ENCODE measurements at regions of chr11 and their contacts with region 1.

Region 1: DNA sequence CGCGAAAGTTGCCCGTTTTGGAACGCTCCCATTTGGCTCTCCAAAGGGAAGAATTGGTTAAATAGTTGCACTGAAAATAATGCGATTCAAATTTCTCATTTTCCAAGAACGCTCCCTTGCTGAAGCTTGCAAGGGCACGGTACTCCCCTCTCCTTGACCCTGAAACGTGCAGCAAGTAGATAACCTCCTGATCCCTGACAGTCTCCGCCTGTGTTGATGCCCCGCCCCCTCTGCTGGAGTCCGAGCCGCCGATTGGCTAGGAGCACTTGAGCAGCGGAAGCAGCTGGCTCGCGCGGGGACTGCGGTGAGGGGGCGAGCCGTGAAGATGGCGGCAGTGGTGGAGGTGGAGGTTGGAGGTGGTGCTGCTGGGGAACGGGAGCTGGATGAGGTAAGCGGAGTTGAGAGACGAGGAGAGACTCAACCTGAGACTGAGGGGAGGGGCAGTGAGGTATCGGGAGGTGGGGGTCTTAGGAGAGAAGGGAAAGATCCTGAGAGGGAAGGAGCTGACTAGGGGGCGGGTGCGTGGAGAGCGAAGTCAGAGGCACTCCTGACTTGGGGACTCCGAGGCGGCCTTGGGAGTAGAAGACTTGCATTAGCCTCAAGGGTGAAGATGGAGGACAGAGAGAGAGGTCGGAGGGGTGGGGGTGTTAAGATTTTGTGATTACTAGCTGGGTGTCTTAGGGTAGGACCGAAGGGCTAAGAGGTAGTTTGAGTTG is at the start of gene RNF121:
- DNase-seq: peak; percentile 96
- H3K4me3 Mint-ChIP-seq: peak within 1 kb of the TSS; percentile 98
- H3K27ac Mint-ChIP-seq: peak within 1 kb of the TSS; percentile 95
- H3K4me1 Mint-ChIP-seq: peaks cover 51% of the 10 kb centered on the region
- H3K27me3 Mint-ChIP-seq: no peaks in the 10 kb centered on the region
- total RNA-seq, gene RNF121: 65.8 and 70.3 TPM in 2 replicates

Region 2: GRCh38 chr11:71787098-71787823 is 141.6 kb before region 1 on chr11:
- intact Hi-C with region 1: loop called (anchors 1 kb)
- DNase-seq: peak; percentile 91
- H3K4me3 Mint-ChIP-seq: peak overlapping the region; percentile 97
- H3K27ac Mint-ChIP-seq: peak overlapping the region; percentile 97
- H3K4me1 Mint-ChIP-seq: peaks cover 23% of the 10 kb centered on the region
- H3K27me3 Mint-ChIP-seq: no peaks in the 10 kb centered on the region

Region 3: GRCh38 chr11:71946144-71946571 is 17.3 kb after region 1 on chr11:
- intact Hi-C with region 1: no loop called
- DNase-seq: no peak
- H3K4me3 Mint-ChIP-seq: no peak overlapping the region
- H3K27ac Mint-ChIP-seq: peak overlapping the region; percentile 76
- H3K4me1 Mint-ChIP-seq: peaks cover 28% of the 10 kb centered on the region
- H3K27me3 Mint-ChIP-seq: no peaks in the 10 kb centered on the region

Region 4: DNA sequence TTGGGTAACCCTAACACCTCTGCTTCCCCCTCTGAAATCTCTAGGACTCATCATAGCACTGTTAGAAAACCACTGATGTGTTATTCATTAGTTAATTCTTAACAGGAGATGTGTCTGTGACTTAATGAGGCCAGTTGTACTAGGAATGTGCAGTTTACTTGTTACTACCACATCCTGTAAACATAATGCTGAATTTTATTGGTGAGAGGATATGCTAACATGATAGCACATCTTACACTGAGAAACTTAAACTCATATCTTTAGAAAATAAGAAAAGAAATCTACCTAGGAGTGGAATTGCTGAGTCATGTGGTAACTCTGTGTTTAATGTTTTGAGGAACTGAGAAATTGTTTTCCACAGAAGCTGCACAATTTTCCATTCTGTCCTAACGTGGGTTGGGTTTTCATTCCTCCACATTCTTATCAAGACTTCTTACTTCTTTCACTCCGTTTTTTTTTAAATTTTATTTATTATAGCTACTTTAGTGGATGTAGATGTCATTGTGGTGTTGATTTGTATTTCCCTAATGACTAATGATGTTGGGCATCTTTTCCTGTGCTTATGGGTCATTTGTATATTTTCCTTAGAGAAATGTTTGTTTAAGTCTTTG is 33.6 kb after region 1 on chr11:
- intact Hi-C with region 1: loop called (anchors 1 kb)
- DNase-seq: no peak
- H3K4me3 Mint-ChIP-seq: peak overlapping the region; percentile 43
- H3K27ac Mint-ChIP-seq: peak overlapping the region; percentile 63
- H3K4me1 Mint-ChIP-seq: peaks cover 38% of the 10 kb centered on the region
- H3K27me3 Mint-ChIP-seq: no peaks in the 10 kb centered on the region

Region 5: GRCh38 chr11:72102946-72103753 is 174.3 kb after region 1 on chr11 and contains the start of gene LAMTOR1:
- intact Hi-C with region 1: loop called (anchors 2 kb)
- DNase-seq: peak; percentile 97
- H3K4me3 Mint-ChIP-seq: peak within 1 kb of the TSS; percentile 95
- H3K27ac Mint-ChIP-seq: peak within 1 kb of the TSS; percentile 87
- H3K4me1 Mint-ChIP-seq: peaks cover 41% of the 10 kb centered on the region
- H3K27me3 Mint-ChIP-seq: no peaks in the 10 kb centered on the region
- total RNA-seq, gene LAMTOR1: 70.2 and 77.7 TPM in 2 replicates